ENCODE measurements at regions of chr2 and their contacts with region 1.

Region 1: GRCh38 chr2:152036611-152037469 is 62.0 kb downstream of the CACNB4 start:
- DNase-seq: peak in 4 of 5 donors; percentile 54 to 73 (median 67)
- ATAC-seq: peak; percentile 44 to 85 (median 66)
- H3K4me3 ChIP-seq: no peak overlapping the region
- H3K27ac ChIP-seq: no peak overlapping the region
- H3K4me1 ChIP-seq: peaks cover 4 to 30% (median 16%) of the 10 kb centered on the region in 12 donors
- H3K27me3 ChIP-seq: no peaks in the 10 kb centered on the region
- CTCF ChIP-seq: peak; percentile 71 to 90 (median 83)
- POLR2A ChIP-seq: no peak

Region 2: DNA sequence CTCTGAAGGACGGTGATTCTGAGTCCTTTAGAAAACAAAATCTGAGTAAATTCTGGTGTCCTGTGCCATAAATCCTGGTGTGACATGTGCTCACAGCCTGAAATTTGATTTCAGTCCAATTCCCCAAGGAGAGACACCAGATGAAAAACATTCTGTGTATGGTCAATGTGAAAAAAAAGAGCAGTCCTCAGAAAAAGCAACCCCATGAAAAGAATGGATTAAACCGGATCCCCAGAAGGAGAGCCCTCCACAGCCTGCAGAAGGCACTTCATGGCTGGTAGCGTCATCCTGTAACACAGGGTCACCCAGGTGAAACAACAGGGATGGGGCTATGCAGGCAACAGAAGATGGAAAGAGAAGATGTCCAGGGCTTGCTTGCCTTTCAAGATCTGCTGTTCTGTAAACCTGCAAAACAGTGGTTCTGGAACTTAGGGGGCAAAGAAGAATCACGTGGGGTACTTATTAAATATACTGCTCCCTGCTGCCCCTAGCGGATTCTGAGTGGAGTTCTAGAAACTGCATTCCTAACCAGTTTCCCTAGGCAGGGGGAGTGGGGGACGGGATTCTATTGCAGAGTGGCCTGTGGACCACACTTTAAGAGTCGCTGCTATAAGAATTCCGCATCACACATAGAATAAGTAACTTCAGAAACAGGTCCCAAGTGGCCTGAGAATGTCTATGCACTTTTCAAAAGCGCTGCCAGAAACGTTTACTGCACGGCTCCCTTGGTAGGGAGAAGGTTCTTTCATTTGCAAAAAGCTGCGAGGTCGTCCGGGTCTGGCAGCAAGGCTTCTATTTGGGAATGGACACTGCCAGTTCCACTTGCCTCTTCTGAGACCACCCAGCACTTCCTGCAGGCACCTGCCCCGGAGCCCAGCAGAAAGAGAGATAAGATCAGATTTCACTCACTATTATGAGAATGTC is 89.7 kb before region 1 on chr2:
- intact Hi-C with region 1: no loop called
- DNase-seq: peak in 4 of 5 donors; percentile 29 to 58 (median 38)
- ATAC-seq: peak; percentile 15 to 77 (median 74)
- H3K4me3 ChIP-seq: peak overlapping the region in 9 of 12 donors; percentile 12 to 51 (median 39)
- H3K27ac ChIP-seq: peak overlapping the region in 4 of 12 donors; percentile 4 to 40 (median 22)
- H3K4me1 ChIP-seq: peaks cover 0 to 18% (median 7%) of the 10 kb centered on the region in 12 donors
- H3K27me3 ChIP-seq: no peaks in the 10 kb centered on the region
- CTCF ChIP-seq: peak; percentile 44 to 79 (median 61)
- POLR2A ChIP-seq: no peak

Region 3: DNA sequence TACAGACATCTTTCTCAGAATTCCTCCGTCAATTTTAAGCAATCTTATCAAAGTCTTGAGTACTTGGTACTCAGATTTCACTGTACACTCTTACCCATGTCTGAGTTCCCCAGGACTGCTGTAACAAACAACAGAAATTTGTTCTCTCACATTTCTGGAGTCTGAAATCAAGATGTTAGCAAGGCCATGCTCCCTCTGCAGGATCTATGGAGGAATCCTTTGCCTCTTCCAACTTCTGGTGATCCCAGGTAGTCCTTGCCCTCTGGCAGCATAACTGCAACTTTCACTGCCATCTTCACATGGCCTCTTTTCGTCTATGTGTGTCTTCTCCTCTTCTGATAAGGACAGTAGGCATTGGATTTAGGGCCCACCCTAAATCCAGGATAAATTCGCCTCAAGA is 79.1 kb after region 1 on chr2:
- intact Hi-C with region 1: loop called in 5 of 10 experiments (anchors 5 to 10 kb)
- DNase-seq: no peak
- ATAC-seq: no peak
- H3K4me3 ChIP-seq: no peak overlapping the region
- H3K27ac ChIP-seq: no peak overlapping the region
- H3K4me1 ChIP-seq: no peaks in the 10 kb centered on the region
- H3K27me3 ChIP-seq: no peaks in the 10 kb centered on the region
- CTCF ChIP-seq: peak in 1 of 12 donors; percentile 13
- POLR2A ChIP-seq: no peak

Region 4: DNA sequence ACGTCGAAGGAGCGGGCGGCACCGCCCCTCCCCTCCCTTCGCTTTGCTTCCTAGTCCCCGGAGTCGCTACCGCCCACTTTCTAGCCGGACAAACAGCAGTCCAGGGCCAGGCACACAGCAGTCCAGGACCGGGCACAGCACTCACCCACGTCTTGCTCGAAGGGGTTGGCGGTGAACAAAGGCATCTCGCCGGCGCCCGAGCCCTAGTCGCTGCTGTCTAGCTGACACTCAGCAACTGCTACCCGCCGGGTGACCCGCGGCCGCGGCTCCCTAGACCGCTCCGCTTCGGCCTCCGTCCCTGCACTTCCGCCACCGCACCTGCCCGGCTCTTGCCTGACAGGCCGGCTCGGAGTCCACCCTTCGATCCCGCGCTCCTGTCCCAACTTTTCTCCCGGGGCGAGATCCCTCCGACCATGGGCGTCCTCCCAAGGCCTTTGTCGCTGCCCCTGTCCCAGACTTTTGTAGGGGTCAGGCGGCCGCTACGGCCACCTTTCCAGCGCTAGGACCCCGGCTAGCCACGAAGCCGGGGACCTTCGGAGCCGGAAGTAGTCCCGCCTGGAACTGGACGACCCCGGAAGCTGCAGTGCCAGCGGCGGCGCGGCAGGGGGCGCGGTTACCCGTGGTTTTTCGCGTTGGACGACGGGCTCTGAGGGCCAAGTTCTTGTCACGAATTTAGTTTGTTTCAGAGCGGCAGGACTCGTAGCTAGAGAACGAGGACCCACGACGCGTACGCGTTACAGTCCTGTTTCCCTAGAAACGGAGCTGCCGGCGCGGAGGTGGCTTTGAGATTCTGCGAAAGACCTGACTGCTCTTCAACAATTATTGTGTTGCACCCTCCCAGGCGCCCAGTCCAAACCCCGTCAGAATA is 138.9 kb after region 1 on chr2 and contains the start of gene STAM2:
- intact Hi-C with region 1: loop called (anchors 1 to 10 kb)
- DNase-seq: peak; percentile 92 to 97 (median 94)
- ATAC-seq: peak; percentile 93 to 97 (median 95)
- H3K4me3 ChIP-seq: peak within 1 kb of the TSS; percentile 65 to 97 (median 72)
- H3K27ac ChIP-seq: peak within 1 kb of the TSS; percentile 92 to 100 (median 96)
- H3K4me1 ChIP-seq: peaks cover 0 to 43% (median 28%) of the 10 kb centered on the region in 12 donors
- H3K27me3 ChIP-seq: no peaks in the 10 kb centered on the region
- CTCF ChIP-seq: peak; percentile 94 to 99 (median 98)
- POLR2A ChIP-seq: peak in 1 of 2 donors; percentile 12
- total RNA-seq, gene STAM2: 21.4 to 36.1 (median 27.0) TPM

Region 5: GRCh38 chr2:152627351-152627957 is 590.6 kb after region 1 on chr2:
- intact Hi-C with region 1: loop called in 6 of 10 experiments (anchors 5 to 10 kb)
- DNase-seq: no peak
- ATAC-seq: peak in 3 of 4 donors; percentile 57 to 71 (median 68)
- H3K4me3 ChIP-seq: no peak overlapping the region
- H3K27ac ChIP-seq: no peak overlapping the region
- H3K4me1 ChIP-seq: peaks cover 0 to 4% (median 0%) of the 10 kb centered on the region in 12 donors
- H3K27me3 ChIP-seq: no peaks in the 10 kb centered on the region
- CTCF ChIP-seq: peak; percentile 41 to 75 (median 62)
- POLR2A ChIP-seq: no peak

Region 6: GRCh38 chr2:152635635-152636298 is 598.9 kb after region 1 on chr2:
- intact Hi-C with region 1: loop called in 9 of 10 experiments (anchors 5 to 10 kb)
- DNase-seq: peak in 3 of 5 donors; percentile 39 to 54 (median 41)
- ATAC-seq: peak in 3 of 4 donors; percentile 55 to 63 (median 63)
- H3K4me3 ChIP-seq: no peak overlapping the region
- H3K27ac ChIP-seq: no peak overlapping the region
- H3K4me1 ChIP-seq: peaks cover 0 to 7% (median 0%) of the 10 kb centered on the region in 12 donors
- H3K27me3 ChIP-seq: no peaks in the 10 kb centered on the region
- CTCF ChIP-seq: peak; percentile 70 to 89 (median 80)
- POLR2A ChIP-seq: no peak

Region 7: GRCh38 chr2:152740743-152741328 is 704.0 kb after region 1 on chr2:
- intact Hi-C with region 1: no loop called
- DNase-seq: no peak
- ATAC-seq: no peak
- H3K4me3 ChIP-seq: no peak overlapping the region
- H3K27ac ChIP-seq: no peak overlapping the region
- H3K4me1 ChIP-seq: no peaks in the 10 kb centered on the region
- H3K27me3 ChIP-seq: no peaks in the 10 kb centered on the region
- CTCF ChIP-seq: peak; percentile 55 to 91 (median 66)
- POLR2A ChIP-seq: no peak

Region 8: GRCh38 chr2:153519257-153519875 is 1482.5 kb after region 1 on chr2:
- intact Hi-C with region 1: loop called in 2 of 10 experiments (anchors 5 to 10 kb)
- DNase-seq: no peak
- ATAC-seq: no peak
- H3K4me3 ChIP-seq: no peak overlapping the region
- H3K27ac ChIP-seq: no peak overlapping the region
- H3K4me1 ChIP-seq: no peaks in the 10 kb centered on the region
- H3K27me3 ChIP-seq: peaks cover 0 to 5% (median 0%) of the 10 kb centered on the region in 9 donors
- CTCF ChIP-seq: peak; percentile 56 to 82 (median 72)
- POLR2A ChIP-seq: no peak

Measured in heart left ventricle (tissue), 16 donors.